ENCODE measurements at regions of chr17 and their contacts with region 1.

Region 1: GRCh38 chr17:78484300-78485246 is 92.6 kb downstream of the DNAH17 start:
- DNase-seq: peak; percentile 65
- H3K4me3 Mint-ChIP-seq: peak overlapping the region; percentile 63
- H3K27ac Mint-ChIP-seq: no peak overlapping the region
- H3K4me1 Mint-ChIP-seq: peaks cover 9% of the 10 kb centered on the region
- H3K27me3 Mint-ChIP-seq: peaks cover 32% of the 10 kb centered on the region
- CTCF ChIP-seq: no peak

Region 2: GRCh38 chr17:78458736-78459331 is 25.7 kb before region 1 on chr17:
- CTCF ChIA-PET with region 1: no interaction called
- intact Hi-C with region 1: no loop called
- DNase-seq: no peak
- H3K4me3 Mint-ChIP-seq: no peak overlapping the region
- H3K27ac Mint-ChIP-seq: no peak overlapping the region
- H3K4me1 Mint-ChIP-seq: no peaks in the 10 kb centered on the region
- H3K27me3 Mint-ChIP-seq: peaks cover 25% of the 10 kb centered on the region
- CTCF ChIP-seq: no peak

Region 3: GRCh38 chr17:78517421-78517820 is 32.8 kb after region 1 on chr17:
- CTCF ChIA-PET with region 1: interaction called, 12 read pairs
- intact Hi-C with region 1: no loop called
- DNase-seq: no peak
- H3K4me3 Mint-ChIP-seq: no peak overlapping the region
- H3K27ac Mint-ChIP-seq: no peak overlapping the region
- H3K4me1 Mint-ChIP-seq: no peaks in the 10 kb centered on the region
- H3K27me3 Mint-ChIP-seq: no peaks in the 10 kb centered on the region
- CTCF ChIP-seq: no peak

Region 4: DNA sequence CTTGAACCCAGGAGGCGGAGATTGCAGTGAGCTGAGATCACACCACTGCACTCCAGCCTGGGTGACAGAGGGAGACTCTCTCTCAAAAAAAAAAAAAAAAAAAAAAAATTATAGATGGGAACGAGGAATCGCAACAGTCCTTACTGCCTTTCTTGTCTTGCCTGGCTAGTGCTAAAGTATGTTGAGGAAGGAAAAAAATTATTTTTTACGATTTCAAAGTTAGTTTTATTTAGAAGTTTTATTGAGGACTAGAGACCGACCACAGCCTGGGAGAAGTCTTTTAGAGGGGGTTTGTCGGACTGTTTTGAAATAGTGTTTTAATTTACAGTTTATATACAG is 108.4 kb after region 1 on chr17:
- CTCF ChIA-PET with region 1: interaction called, 13 read pairs
- intact Hi-C with region 1: no loop called
- DNase-seq: no peak
- H3K4me3 Mint-ChIP-seq: peak overlapping the region; percentile 52
- H3K27ac Mint-ChIP-seq: peak overlapping the region; percentile 52
- H3K4me1 Mint-ChIP-seq: peaks cover 12% of the 10 kb centered on the region
- H3K27me3 Mint-ChIP-seq: no peaks in the 10 kb centered on the region
- CTCF ChIP-seq: no peak

Measured in Calu3 (cell line).